ENCODE measurements at regions of chr3 and their contacts with region 1.

Region 1: DNA sequence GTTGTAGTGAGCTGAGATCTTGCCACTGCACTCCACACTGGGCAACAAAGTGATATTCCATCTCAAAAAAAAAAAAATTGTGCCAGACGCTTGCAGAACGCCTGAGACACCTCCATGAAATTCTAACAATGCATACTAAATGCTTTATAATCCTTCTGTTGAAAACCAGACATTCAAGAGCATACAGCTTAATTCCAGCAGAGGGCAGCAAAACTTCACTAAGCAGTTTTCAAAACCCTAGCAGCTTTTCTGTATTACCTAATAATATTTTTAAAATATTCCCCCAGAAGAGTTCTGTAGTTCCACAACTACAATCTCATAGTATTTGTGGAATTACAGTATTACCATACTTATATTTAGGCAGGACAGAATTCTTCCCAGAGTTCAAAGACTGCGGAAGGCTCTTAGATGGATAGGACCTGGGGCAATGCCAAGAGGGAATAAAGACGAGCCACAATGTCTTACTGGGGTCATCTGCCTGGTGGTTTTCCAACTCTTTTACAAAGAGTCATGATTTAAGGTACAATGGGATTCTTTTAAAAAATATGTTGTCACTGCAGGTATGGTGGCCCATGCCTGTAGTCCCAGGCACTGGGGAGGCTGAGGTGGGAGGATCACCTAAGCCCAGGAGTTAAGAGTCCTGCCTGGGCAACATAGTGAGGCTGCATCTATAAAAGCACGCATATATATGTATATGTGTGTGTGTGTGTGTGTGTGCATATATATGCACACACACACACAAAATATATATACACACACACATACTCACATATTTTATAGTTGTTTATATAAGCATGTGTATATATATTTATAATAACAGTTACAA is 19.6 kb upstream of the TASOR start:
- DNase-seq: peak; percentile 64
- CTCF ChIP-seq: peak; percentile 68

Region 2: GRCh38 chr3:56443372-56443771 is 259.3 kb before region 1 on chr3:
- in situ Hi-C with region 1: no loop called
- DNase-seq: no peak
- CTCF ChIP-seq: no peak

Region 3: GRCh38 chr3:56990641-56991015 is 287.9 kb after region 1 on chr3:
- in situ Hi-C with region 1: loop called (anchors 5 kb)
- DNase-seq: no peak
- CTCF ChIP-seq: no peak

Region 4: GRCh38 chr3:57252404-57252803 is 549.7 kb after region 1 on chr3:
- in situ Hi-C with region 1: no loop called
- DNase-seq: no peak
- CTCF ChIP-seq: no peak